ENCODE measurements at regions of chr12 and their contacts with region 1.

Region 1: DNA sequence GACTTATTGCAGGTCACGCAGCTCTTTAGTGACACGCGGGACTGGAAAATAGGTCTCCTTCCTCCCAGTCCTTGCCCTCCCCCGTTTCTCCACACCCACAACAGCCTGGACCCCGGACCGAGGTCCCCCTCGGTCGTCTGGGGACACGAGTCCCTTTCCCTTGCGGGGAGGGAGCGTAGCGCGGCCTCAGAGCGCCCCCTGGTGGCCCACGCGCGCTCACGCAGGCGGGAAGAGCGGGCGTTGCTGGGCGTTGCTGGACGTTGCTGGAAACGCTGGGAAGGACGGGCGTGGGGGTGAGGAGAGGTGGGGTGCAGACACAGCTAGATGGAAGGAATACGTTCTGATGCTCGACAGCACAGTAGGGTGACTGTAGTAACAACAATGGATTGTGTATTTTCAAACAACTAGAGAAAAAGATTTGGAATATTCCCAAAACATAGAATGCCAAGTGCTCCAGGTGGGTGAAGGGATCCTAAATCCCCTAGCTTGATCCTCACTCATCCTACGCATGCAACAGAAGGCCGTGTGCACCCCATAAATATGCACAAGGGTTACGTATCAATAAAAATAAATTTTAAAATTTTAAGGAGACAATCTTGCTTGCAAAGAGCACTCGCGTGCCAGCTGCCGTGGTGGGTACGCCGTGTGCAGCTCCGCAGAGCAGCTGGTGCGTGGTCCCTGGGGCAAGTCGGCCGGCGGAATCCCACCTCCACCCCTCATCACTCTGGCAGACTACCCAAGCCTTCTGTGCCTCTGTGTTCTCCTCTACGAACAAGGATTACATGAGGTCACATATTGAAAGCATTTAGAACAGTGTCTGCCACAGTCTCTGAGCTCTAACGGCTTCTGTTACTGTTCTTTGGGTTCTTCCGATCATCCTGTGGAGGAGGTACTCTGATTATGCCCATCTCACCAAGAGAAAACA is 87.4 kb downstream of the B4GALNT3 start:
- DNase-seq: no peak
- H3K4me3 ChIP-seq: no peak overlapping the region
- H3K27ac ChIP-seq: no peak overlapping the region
- H3K4me1 ChIP-seq: peaks cover 9% of the 10 kb centered on the region
- H3K27me3 ChIP-seq: no peaks in the 10 kb centered on the region
- CTCF ChIP-seq: peak; percentile 90 to 99 (median 98)
- POLR2A ChIP-seq: no peak

Region 2: DNA sequence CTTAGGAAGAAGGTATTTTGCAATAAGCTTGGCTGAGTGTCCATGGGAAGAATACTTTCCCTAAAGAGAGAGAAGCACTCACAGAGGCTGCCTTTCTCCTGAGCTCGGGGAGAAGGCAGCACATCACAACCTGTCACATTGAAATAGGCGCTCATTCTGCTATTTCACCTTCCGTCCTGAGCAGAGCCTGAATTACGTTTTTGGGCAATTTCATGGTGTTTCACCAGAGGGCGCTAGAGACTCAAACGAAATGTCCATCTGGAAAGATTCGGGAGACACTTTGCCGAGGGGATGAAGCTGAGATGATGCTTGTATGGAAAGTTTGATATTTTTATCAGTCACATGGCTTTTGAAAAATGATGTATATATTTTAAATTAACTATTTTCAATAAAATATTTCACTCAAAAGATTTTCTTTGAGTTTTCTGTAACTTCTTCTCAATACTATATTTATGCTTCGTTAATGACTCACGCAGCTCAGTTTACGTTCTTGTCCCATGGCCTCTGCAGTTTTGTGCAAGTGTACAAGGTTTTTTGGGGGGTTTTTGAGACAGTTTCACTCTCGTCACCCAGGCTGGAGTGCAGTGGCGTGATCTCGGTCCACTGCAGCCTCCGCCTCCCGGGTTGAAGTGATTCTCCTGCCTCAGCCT is 104.8 kb before region 1 on chr12:
- intact Hi-C with region 1: loop called (anchors 5 kb)
- DNase-seq: no peak
- H3K4me3 ChIP-seq: no peak overlapping the region
- H3K27ac ChIP-seq: no peak overlapping the region
- H3K4me1 ChIP-seq: no peaks in the 10 kb centered on the region
- H3K27me3 ChIP-seq: no peaks in the 10 kb centered on the region
- CTCF ChIP-seq: peak; percentile 49 to 71 (median 65)
- POLR2A ChIP-seq: no peak

Region 3: DNA sequence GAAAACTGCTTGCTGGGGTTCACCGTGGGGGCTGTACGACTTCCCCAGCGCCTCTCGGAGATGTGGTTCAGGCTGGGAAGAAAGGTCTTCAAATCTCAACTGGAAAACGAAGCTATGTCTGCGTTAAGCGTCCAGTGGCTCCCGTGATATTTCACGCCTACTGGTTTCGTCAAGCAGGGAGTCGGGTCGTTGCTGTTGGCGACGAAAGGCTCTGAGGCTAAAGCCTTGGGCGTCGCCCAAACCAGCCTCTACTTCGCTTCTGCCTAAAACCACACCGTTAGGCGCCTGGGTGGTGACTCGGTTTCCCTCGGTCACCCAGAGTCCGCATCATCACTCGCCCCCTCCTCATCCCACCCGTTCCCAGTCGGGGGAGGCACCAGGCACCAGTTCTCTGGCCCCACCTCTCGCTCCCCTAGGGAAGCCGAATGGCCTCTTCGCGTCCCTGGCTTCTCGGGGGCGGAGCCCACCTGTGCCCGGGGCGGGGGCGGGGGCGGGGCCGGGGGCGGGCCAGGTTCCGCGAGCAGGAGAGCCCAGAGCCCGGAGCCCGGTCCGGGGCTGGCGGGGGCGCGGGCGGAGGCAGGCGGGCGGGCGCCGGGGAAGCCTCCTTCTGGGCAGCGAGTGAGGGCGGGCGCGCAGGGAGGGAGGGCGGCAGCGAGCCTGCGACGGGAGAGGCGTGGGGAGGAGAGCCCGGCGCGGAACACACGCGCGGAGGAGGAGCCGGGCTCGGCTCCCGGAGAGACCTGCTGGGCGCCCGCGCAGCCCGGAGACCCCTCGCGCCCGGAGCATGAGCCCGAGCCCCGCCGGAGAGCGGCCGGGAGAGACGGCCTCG is 87.5 kb before region 1 on chr12 and contains the start of gene B4GALNT3:
- intact Hi-C with region 1: loop called (anchors 5 kb)
- DNase-seq: no peak
- H3K4me3 ChIP-seq: peak within 1 kb of the TSS; percentile 55 to 56
- H3K27ac ChIP-seq: peak within 1 kb of the TSS; percentile 26
- H3K4me1 ChIP-seq: peaks cover 18% of the 10 kb centered on the region
- H3K27me3 ChIP-seq: no peaks in the 10 kb centered on the region
- CTCF ChIP-seq: no peak
- POLR2A ChIP-seq: no peak
- total RNA-seq, gene B4GALNT3: 13.3 TPM

Region 4: GRCh38 chr12:1054117-1054870 is 507.1 kb after region 1 on chr12:
- intact Hi-C with region 1: no loop called
- DNase-seq: no peak
- H3K4me3 ChIP-seq: no peak overlapping the region
- H3K27ac ChIP-seq: no peak overlapping the region
- H3K4me1 ChIP-seq: peaks cover 9% of the 10 kb centered on the region
- H3K27me3 ChIP-seq: no peaks in the 10 kb centered on the region
- CTCF ChIP-seq: no peak
- POLR2A ChIP-seq: no peak